WTC11 (cell line): ENCODE measurements at regions of chr5 and their contacts with region 1.

Region 1: DNA sequence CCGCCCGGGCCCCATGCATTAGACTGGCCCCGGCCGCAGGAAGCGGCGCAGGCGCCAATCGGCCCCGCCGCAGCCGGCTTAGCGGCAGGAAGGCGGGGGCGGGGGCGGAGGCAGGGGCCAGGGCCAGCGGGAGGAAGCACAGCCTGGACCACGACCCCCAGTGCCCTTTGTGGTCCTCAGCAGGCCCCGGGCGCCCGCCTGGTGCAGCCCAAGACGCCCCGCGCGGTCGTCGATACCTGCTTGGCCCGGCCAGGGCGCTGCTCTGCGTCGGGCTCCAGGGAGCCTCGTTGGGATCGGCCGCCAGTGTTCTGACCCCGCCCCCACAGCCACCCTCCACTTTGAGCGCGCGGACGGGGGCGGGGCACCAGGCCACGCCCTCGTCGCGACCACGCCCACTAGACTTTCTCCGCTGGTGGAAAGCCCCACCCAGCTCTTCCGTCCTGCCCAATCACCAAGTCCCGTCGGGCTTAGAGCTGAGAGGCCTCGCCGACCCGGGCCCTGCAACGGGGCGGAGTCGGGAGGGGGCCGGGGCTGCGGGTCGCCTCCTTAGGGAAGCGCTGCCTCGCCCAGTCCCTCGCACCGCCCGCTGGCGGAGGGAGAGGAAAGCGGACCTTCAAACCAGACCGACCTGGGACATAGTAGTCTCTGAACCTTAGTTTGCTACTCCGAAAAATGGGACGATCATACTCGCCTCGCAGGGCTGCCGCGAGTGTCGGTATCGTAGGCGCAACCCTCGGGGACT is at the start of gene PDLIM7:
- DNase-seq: peak; percentile 97
- ATAC-seq: peak; percentile 71
- H3K4me3 Mint-ChIP-seq: peak within 1 kb of the TSS; percentile 80
- H3K27ac Mint-ChIP-seq: peak within 1 kb of the TSS; percentile 92; the same call in 1 of the 2 replicates
- H3K4me1 Mint-ChIP-seq: peaks cover 36% of the 10 kb centered on the region
- H3K27me3 Mint-ChIP-seq: peaks cover 31% of the 10 kb centered on the region
- CTCF ChIP-seq: no peak
- total RNA-seq, gene PDLIM7: 124 to 142 TPM (median 139 TPM) in 3 replicates

Region 2: GRCh38 chr5:177276886-177277285 is 220.6 kb before region 1 on chr5:
- CTCF ChIA-PET with region 1: no interaction called
- POLR2A ChIA-PET with region 1: no interaction called
- DNase-seq: no peak
- ATAC-seq: no peak
- H3K4me3 Mint-ChIP-seq: no peak overlapping the region
- H3K27ac Mint-ChIP-seq: no peak overlapping the region; the same call in 1 of the 2 replicates
- H3K4me1 Mint-ChIP-seq: no peaks in the 10 kb centered on the region
- H3K27me3 Mint-ChIP-seq: no peaks in the 10 kb centered on the region
- CTCF ChIP-seq: no peak

Region 3: GRCh38 chr5:177419051-177419450 is 78.4 kb before region 1 on chr5:
- CTCF ChIA-PET with region 1: no interaction called
- POLR2A ChIA-PET with region 1: no interaction called
- DNase-seq: no peak
- ATAC-seq: no peak
- H3K4me3 Mint-ChIP-seq: no peak overlapping the region
- H3K27ac Mint-ChIP-seq: no peak overlapping the region
- H3K4me1 Mint-ChIP-seq: no peaks in the 10 kb centered on the region
- H3K27me3 Mint-ChIP-seq: peaks cover 19% of the 10 kb centered on the region
- CTCF ChIP-seq: no peak

Region 4: DNA sequence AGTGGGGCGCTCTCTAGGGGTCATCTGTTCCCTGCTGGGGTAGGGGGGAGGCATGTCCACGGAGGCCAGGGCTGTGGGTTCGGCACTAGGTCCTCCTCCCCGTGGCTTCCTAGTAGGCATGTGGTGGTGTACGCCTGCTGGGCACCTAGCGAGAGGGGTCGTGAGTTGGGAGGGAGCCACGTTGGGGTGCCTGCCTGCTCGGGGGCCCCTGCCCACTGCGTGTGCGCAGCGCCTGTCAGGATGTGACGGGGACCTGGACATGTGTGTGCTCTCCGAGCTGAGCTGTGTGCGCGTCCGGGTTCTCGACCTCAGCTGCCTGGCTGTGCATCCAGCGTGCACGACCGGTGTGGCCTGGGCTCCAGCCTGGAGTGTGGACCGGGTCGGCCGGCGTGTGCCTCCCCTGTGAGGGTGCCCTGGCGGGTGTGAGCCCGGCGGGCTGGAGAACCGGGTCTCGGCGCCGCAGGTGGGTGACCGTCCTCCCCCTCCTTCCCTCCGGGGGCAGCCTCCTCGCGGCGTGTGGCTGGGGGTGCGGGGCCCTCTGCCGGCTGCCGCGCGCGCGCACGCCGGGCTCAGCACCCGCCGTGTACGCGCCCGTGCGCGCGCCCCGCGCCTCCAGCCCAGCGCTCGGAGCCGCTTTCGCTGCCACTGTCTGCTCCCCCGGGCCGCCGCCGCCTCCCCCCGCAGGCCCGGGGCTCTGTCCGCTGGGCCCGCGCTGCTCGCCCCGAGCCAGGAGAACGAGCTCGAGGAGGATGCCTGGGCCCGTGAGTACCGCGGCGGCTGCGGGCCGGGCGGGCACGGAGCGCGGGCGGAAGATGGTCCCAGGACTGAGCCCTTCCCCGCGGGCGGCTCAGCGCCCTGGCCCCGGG is 51.0 kb before region 1 on chr5 and contains the start of gene PRR7:
- CTCF ChIA-PET with region 1: interaction called, 11 read pairs
- POLR2A ChIA-PET with region 1: interaction called, 10 read pairs
- DNase-seq: peak; percentile 60
- ATAC-seq: peak; percentile 14
- H3K4me3 Mint-ChIP-seq: peak within 1 kb of the TSS; percentile 66
- H3K27ac Mint-ChIP-seq: no peak within 1 kb of the TSS
- H3K4me1 Mint-ChIP-seq: peaks cover 44% of the 10 kb centered on the region
- H3K27me3 Mint-ChIP-seq: peaks cover 41% of the 10 kb centered on the region
- CTCF ChIP-seq: no peak
- total RNA-seq, gene PRR7: 13.1 to 14.7 TPM (median 14.6 TPM) in 3 replicates

Region 5: DNA sequence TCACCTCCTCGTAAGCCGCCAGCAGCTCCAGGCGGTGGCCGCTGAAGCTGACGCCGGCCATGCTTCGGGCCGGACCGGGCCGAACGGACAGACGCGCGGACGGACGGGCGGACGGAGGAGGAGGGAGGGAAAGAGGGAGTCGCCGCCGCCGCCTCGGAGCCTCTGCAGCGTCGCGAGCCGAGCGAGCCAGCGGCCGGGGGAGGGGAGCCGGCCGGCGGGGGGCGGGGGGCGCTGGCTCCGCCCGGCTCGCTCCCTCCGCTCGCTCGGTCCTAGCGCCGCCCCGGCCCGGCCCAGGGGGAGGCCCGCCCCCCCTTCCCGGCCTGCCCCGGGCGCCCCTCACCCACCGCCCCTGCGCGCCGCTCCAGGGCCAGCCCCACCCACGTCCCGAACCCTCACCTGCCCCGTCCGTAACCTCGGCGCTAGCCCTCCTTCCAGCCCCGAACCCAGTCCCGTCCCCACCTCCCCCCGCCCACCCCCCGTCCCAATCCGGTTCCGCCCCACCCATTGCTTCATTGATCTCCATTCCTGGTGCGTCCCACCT is 23.9 kb before region 1 on chr5 and contains the start of gene DBN1:
- CTCF ChIA-PET with region 1: interaction called, 230 read pairs
- POLR2A ChIA-PET with region 1: interaction called, 53 read pairs
- DNase-seq: peak; percentile 64
- ATAC-seq: peak; percentile 51
- H3K4me3 Mint-ChIP-seq: peak within 1 kb of the TSS; percentile 76
- H3K27ac Mint-ChIP-seq: peak within 1 kb of the TSS; percentile 69
- H3K4me1 Mint-ChIP-seq: peaks cover 56% of the 10 kb centered on the region
- H3K27me3 Mint-ChIP-seq: no peaks in the 10 kb centered on the region
- CTCF ChIP-seq: no peak
- total RNA-seq, gene DBN1: 267 to 288 TPM (median 269 TPM) in 3 replicates

Region 6: GRCh38 chr5:177478711-177479646 is 18.5 kb before region 1 on chr5:
- CTCF ChIA-PET with region 1: interaction called, 230 read pairs
- POLR2A ChIA-PET with region 1: interaction called, 53 read pairs
- DNase-seq: no peak
- ATAC-seq: no peak
- H3K4me3 Mint-ChIP-seq: no peak overlapping the region
- H3K27ac Mint-ChIP-seq: peak overlapping the region; percentile 57; the same call in 1 of the 2 replicates
- H3K4me1 Mint-ChIP-seq: peaks cover 27% of the 10 kb centered on the region
- H3K27me3 Mint-ChIP-seq: no peaks in the 10 kb centered on the region
- CTCF ChIP-seq: no peak

Region 7: GRCh38 chr5:177509381-177509951 is 12.0 kb after region 1 on chr5 and contains the start of gene DOK3:
- CTCF ChIA-PET with region 1: interaction called, 57 read pairs
- POLR2A ChIA-PET with region 1: interaction called, 9 read pairs
- DNase-seq: no peak
- ATAC-seq: peak; percentile 21
- H3K4me3 Mint-ChIP-seq: no peak within 1 kb of the TSS
- H3K27ac Mint-ChIP-seq: peak within 1 kb of the TSS; percentile 90
- H3K4me1 Mint-ChIP-seq: peaks cover 17% of the 10 kb centered on the region
- H3K27me3 Mint-ChIP-seq: no peaks in the 10 kb centered on the region
- CTCF ChIP-seq: no peak
- total RNA-seq, gene DOK3: 9.0 to 9.9 TPM (median 9.0 TPM) in 3 replicates

Region 8: DNA sequence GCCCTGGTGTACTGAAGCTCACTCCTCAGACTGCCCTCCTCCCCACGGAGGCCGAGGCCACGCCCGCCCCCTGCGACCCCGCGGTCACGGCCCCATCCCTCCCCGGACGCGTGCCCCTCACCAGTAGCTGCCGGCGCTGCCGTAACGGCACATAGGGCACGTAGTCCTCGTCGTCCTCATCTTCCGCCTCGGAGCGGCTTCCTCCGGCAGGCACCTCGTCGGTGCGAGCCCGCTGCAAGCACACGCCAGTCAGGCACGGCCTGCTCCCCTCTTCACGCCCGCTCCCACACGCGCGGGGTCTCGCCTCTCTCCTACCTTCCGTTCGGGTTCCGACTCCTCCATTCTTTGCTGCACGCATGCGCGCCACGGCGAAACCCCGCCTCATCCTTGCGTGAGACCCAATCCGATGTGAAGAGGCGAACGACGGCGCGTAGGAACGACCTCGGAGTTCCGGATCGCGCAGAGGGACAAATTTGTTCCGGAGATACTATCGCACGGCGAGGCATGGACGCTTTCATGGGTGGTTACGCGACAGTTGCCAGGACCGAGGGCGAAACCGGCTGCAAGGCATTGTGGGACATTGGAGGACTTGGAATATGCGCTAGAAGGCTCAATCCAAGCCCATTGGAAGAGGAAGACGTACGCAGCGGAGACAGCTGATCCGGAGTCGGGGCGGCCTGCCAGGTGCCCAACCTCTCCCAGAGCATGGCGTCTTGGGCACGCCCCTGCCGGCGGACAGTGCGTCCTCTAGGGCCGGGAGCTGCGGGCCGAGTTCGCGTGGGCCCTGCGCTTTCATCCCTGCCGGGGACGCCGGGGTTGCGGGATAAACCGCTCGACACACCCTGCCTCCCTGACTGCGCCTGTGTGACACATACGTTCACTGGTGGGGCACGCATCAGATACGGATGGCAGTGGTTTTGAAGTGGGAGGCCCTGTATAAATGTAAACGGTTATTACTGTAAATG is 19.4 kb after region 1 on chr5 and contains the start of gene DDX41:
- CTCF ChIA-PET with region 1: interaction called, 29 read pairs
- POLR2A ChIA-PET with region 1: interaction called, 3 read pairs
- DNase-seq: peak; percentile 95
- ATAC-seq: peak; percentile 89
- H3K4me3 Mint-ChIP-seq: peak within 1 kb of the TSS; percentile 93
- H3K27ac Mint-ChIP-seq: peak within 1 kb of the TSS; percentile 98
- H3K4me1 Mint-ChIP-seq: peaks cover 14% of the 10 kb centered on the region
- H3K27me3 Mint-ChIP-seq: peaks cover 4% of the 10 kb centered on the region; the same call in 1 of the 2 replicates
- CTCF ChIP-seq: no peak
- total RNA-seq, gene DDX41: 136 to 156 TPM (median 137 TPM) in 3 replicates